ENCODE measurements at regions of chr11 and their contacts with region 1.

Region 1: DNA sequence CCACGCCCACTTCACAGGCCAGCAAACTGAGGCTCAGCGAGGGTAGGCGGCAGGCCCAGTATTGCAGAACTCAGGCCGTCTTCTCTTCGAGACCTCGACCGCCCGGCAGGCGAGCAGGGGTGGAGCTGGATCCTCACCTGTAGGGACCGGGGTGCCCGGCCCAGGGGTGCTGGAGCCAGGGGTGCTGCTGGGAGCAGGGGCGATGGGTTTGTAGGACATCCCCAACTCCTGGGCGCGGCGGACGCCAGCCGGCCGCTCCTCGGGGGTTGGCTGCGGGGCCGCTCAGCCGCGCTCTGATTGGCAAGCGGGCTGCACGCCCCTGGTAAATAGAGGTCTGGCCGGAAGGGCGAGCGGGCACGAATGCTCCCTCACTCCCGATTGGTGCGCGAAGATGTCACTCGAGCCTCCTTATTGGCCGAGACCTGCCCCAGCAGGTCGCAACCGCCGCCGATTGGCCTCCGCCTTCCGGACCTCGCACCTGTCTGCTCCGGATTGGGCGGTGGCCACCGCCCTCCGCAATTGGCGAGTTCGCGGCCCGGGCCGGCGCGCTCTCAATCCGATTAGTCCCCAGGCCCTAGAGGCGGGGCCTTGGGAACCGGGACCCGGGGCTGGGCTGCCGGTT is at the start of gene CDK2AP2:
- DNase-seq: peak; percentile 97
- H3K4me3 Mint-ChIP-seq: peak within 1 kb of the TSS; percentile 92
- H3K27ac Mint-ChIP-seq: peak within 1 kb of the TSS; percentile 78
- H3K4me1 Mint-ChIP-seq: peaks cover 24% of the 10 kb centered on the region
- H3K27me3 Mint-ChIP-seq: peaks cover 11% of the 10 kb centered on the region
- total RNA-seq, gene CDK2AP2: 117 and 119 TPM in 2 replicates

Region 2: GRCh38 chr11:67288452-67289225 is 219.3 kb before region 1 on chr11:
- intact Hi-C with region 1: loop called (anchors 5 kb)
- DNase-seq: peak; percentile 89
- H3K4me3 Mint-ChIP-seq: peak overlapping the region; percentile 81
- H3K27ac Mint-ChIP-seq: peak overlapping the region; percentile 96
- H3K4me1 Mint-ChIP-seq: peaks cover 44% of the 10 kb centered on the region
- H3K27me3 Mint-ChIP-seq: no peaks in the 10 kb centered on the region

Region 3: DNA sequence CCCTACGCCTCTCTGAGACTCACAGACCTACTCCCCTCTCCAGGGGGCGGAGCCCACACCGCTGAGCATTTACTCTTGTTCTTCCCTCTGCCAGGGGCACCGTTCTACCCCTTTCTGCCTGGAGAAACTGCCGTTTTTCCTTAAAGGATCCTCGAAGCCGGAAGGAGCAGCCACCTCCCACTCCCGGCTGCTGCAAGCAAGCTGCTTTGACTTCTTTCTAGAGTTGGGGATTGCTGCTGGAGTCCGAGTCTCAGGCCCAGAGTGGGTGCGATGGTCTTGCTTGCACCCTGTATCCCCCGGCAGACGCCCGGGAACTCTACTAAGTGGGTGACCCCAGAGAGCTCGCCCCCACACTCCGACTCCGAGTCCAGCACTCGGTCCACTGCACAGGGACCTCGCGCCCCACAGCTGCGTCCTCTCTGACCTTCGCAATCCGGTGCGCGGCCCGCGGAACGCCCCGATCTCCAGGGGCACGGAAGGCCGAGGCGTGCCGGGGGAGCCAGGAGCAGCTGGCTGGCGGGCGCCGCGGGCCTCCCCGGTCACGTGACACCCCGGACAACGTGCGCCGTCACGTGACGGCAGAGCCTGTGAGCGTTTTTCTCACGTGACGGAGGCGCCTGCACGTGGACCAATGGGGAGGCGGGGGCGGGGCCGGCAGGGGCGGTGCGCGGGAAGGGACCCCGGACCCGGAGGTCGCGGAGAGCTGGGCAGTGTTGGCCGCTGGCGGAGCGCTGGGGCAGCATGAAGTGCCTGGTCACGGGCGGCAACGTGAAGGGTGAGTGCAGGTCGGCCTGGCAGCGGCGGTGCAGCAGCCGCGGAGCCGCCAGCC is 116.5 kb before region 1 on chr11 and contains the start of gene RAD9A:
- intact Hi-C with region 1: loop called (anchors 1 kb)
- DNase-seq: peak; percentile 89
- H3K4me3 Mint-ChIP-seq: peak within 1 kb of the TSS; percentile 89
- H3K27ac Mint-ChIP-seq: peak within 1 kb of the TSS; percentile 52
- H3K4me1 Mint-ChIP-seq: peaks cover 27% of the 10 kb centered on the region
- H3K27me3 Mint-ChIP-seq: no peaks in the 10 kb centered on the region
- total RNA-seq, gene RAD9A: 32.1 and 34.1 TPM in 2 replicates

Region 4: GRCh38 chr11:67420646-67421420 is 87.1 kb before region 1 on chr11:
- intact Hi-C with region 1: loop called (anchors 5 kb)
- DNase-seq: peak; percentile 94
- H3K4me3 Mint-ChIP-seq: peak overlapping the region; percentile 67
- H3K27ac Mint-ChIP-seq: no peak overlapping the region
- H3K4me1 Mint-ChIP-seq: peaks cover 24% of the 10 kb centered on the region
- H3K27me3 Mint-ChIP-seq: peaks cover 10% of the 10 kb centered on the region

Region 5: GRCh38 chr11:67468835-67469811 is 38.9 kb before region 1 on chr11 and contains the start of gene TMEM134:
- intact Hi-C with region 1: loop called (anchors 1 kb)
- DNase-seq: peak; percentile 86
- H3K4me3 Mint-ChIP-seq: peak within 1 kb of the TSS; percentile 92
- H3K27ac Mint-ChIP-seq: peak within 1 kb of the TSS; percentile 68
- H3K4me1 Mint-ChIP-seq: peaks cover 25% of the 10 kb centered on the region
- H3K27me3 Mint-ChIP-seq: no peaks in the 10 kb centered on the region
- total RNA-seq, gene TMEM134: 58.5 and 62.0 TPM in 2 replicates

Region 6: DNA sequence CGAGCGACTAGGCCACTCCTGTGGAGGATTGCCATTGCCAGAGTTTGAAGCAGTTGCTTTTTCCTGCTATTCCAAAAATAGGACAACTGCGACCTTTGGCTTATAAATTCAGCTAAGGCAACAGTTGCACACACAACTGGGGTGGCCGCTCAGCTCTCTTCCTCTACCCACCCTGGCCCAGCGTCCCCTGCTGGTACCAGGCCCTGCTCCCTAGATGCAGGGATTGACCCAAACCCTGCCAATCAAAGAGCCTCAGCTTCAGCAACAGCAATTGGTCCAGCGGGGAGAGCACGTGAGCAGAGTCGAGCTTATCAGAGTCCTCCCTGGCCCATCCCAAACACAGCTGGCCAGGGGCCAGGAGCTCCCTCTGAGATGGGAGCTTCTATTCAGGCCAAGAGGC is 37.3 kb after region 1 on chr11:
- intact Hi-C with region 1: no loop called
- DNase-seq: no peak
- H3K4me3 Mint-ChIP-seq: no peak overlapping the region
- H3K27ac Mint-ChIP-seq: no peak overlapping the region
- H3K4me1 Mint-ChIP-seq: no peaks in the 10 kb centered on the region
- H3K27me3 Mint-ChIP-seq: peaks cover 9% of the 10 kb centered on the region

Region 7: DNA sequence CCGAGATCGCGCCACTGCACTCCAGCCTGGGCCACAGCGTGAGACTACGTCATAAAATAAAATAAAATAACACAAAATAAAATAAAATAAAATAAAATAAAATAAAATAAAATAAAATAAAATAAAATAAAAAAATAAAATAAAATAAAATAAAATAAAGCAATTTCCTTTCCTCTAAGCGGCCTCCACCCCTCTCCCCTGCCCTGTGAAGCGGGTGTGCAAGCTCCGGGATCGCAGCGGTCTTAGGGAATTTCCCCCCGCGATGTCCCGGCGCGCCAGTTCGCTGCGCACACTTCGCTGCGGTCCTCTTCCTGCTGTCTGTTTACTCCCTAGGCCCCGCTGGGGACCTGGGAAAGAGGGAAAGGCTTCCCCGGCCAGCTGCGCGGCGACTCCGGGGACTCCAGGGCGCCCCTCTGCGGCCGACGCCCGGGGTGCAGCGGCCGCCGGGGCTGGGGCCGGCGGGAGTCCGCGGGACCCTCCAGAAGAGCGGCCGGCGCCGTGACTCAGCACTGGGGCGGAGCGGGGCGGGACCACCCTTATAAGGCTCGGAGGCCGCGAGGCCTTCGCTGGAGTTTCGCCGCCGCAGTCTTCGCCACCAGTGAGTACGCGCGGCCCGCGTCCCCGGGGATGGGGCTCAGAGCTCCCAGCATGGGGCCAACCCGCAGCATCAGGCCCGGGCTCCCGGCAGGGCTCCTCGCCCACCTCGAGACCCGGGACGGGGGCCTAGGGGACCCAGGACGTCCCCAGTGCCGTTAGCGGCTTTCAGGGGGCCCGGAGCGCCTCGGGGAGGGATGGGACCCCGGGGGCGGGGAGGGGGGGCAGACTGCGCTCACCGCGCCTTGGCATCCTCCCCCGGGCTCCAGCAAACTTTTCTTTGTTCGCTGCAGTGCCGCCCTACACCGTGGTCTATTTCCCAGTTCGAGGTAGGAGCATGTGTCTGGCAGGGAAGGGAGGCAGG is 75.6 kb after region 1 on chr11 and contains the start of gene GSTP1:
- intact Hi-C with region 1: loop called (anchors 2 kb)
- DNase-seq: peak; percentile 69
- H3K4me3 Mint-ChIP-seq: peak within 1 kb of the TSS; percentile 95
- H3K27ac Mint-ChIP-seq: peak within 1 kb of the TSS; percentile 88
- H3K4me1 Mint-ChIP-seq: peaks cover 30% of the 10 kb centered on the region
- H3K27me3 Mint-ChIP-seq: peaks cover 19% of the 10 kb centered on the region
- total RNA-seq, gene GSTP1: 339 and 344 TPM in 2 replicates

Measured in activated T-helper 2 cell treated with anti-CD3 and anti-CD28 coated beads, Interferon-gamma antibody, Interleukin-2, Interleukin-4, amounts not matched to agents 10 μg/mL and 5 μg/mL and 100 μg/mL, durations not matched to agents 14 hours and 24 hours and 36 hours (primary cell).